Upper lobe of right lung (tissue), 1 donor: ENCODE measurements at regions of chr15 and their contacts with region 1.

Region 1: DNA sequence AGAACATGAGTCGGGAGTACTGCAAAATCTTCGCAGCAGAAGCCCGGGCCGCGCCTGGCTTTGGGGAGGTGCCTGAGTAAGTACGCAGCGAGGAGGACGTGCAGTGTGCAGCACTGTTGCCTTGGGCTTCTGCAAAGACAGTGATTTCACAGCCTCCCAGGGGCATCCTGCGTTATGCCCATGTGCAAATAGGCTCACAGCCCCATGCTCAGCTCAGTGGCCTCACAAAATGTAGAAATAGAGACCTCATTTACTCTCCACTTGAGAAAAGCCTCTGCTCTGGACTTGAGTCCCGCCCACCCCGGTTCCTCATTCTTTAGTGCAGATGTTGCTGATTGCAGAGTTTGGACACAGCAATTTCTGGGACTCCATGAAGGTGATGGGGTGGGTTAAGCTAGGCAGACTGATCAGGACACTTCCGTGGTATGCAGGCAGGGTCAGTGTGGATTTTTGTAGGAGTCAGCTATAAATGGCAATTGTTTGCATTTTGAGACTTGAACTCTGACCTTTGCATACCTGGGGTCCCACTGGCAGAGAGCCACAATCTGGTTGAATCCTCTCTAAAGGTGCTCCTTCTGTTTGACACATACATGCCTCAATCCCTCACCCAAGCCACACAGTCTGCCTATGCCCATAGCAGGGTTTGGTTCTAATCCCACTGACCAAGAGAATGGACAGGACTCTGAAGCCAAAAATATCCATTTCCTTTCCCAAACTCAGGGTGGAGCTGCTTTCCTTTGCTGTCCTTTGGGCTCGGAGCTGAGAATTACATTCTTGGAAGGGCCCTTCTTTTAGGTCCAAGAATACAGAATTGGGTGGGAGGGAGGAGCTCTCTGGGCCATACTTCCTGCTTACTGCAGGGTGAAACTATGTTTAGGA is 20.7 kb upstream of the SLC28A1 start:
- DNase-seq: no peak
- ATAC-seq: no peak
- H3K4me3 ChIP-seq: no peak overlapping the region
- H3K27ac ChIP-seq: no peak overlapping the region
- H3K4me1 ChIP-seq: no peaks in the 10 kb centered on the region
- H3K27me3 ChIP-seq: no peaks in the 10 kb centered on the region
- CTCF ChIP-seq: peak; percentile 7

Region 2: GRCh38 chr15:84783496-84784251 is 80.1 kb before region 1 on chr15:
- intact Hi-C with region 1: no loop called
- DNase-seq: no peak
- ATAC-seq: peak; percentile 5
- H3K4me3 ChIP-seq: no peak overlapping the region
- H3K27ac ChIP-seq: no peak overlapping the region
- H3K4me1 ChIP-seq: peaks cover 19% of the 10 kb centered on the region
- H3K27me3 ChIP-seq: no peaks in the 10 kb centered on the region
- CTCF ChIP-seq: no peak

Region 3: GRCh38 chr15:84915011-84915958 is 51.5 kb after region 1 on chr15:
- intact Hi-C with region 1: loop called (anchors 10 kb)
- DNase-seq: peak; percentile 71
- ATAC-seq: peak; percentile 84
- H3K4me3 ChIP-seq: no peak overlapping the region
- H3K27ac ChIP-seq: peak overlapping the region; percentile 58
- H3K4me1 ChIP-seq: peaks cover 20% of the 10 kb centered on the region
- H3K27me3 ChIP-seq: no peaks in the 10 kb centered on the region
- CTCF ChIP-seq: no peak